Posterior cingulate gyrus (tissue), 11 donors: ENCODE measurements at regions of chr17 and their contacts with region 1.

Region 1: DNA sequence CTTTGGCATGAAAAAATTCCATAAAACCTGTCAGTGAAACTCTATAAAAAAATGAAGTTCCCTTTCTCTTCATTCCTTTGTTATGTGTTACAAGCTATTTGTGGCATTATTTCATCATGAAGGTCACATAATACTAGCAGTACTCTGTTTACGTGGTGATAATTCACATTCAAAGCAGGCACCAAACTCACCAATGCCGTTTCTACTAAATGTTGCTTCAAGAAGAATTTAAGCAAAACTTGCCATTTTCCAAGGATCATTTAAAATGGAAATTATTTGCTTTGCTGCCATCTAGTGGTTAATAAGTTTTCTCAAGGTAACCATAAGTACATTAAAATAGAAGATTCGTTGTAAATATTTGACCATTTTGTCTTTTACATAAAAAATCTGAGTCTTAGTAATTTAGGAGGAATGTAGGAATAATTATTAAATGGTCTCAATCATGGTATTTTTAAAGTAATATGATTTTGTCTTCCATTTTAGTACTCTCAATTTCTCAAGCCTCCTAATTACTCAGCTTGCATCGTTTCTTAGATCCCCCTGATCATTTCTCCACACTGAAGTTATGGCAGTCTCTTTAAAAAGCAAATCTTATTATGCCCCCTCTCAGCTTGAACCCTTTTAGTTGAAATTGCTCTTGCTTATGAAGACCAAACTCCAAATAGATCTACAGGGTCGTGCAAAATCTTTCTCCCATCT is 80.8 kb downstream of the OMG start:
- DNase-seq: no peak

Region 2: GRCh38 chr17:31094600-31095238 is 121.5 kb before region 1 on chr17 and contains the start of gene NF1:
- intact Hi-C with region 1: loop called (anchors 10 kb)
- DNase-seq: peak; percentile 90 to 99 (median 94)